Activated T-helper 1 cell treated with anti-CD3 and anti-CD28 coated beads, Interleukin-12 subunit alpha, Interleukin-12 subunit beta, Interleukin-2, Interleukin-4 antibody, amounts not matched to agents 30 ng/mL and 10 ng/mL and 1 ng/mL, durations not matched to agents 14 hours and 24 hours and 36 hours (primary cell): ENCODE measurements at regions of chr10 and their contacts with region 1.

Region 1: GRCh38 chr10:28604567-28605536 is 71.9 kb downstream of the WAC start:
- DNase-seq: no peak
- H3K4me3 Mint-ChIP-seq: no peak overlapping the region
- H3K27ac Mint-ChIP-seq: no peak overlapping the region
- H3K4me1 Mint-ChIP-seq: peaks cover 33% of the 10 kb centered on the region
- H3K27me3 Mint-ChIP-seq: no peaks in the 10 kb centered on the region

Region 2: DNA sequence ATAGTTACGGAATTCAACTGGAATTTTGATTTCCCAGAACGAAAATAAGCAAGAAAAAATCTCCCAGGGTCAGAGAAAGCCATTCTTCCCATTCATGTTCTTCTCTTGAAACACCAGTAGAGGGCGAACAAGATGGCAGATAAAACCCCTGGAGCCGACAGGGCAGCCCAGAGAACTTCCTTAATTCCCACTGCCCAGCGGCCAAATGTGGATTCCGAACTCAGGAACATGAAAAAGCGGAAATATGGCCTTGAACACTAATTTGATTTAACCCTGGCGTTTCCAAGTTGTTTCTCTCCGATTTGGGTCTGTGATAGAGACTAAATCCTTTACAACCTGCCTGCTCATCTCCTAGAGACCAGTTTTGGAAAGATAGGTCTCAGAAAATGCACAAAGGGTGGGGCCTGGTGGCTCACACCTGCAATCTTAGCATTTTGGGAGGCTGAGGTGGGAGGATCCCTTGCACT is 172.6 kb before region 1 on chr10:
- intact Hi-C with region 1: loop called (anchors 5 kb)
- DNase-seq: no peak
- H3K4me3 Mint-ChIP-seq: no peak overlapping the region
- H3K27ac Mint-ChIP-seq: no peak overlapping the region
- H3K4me1 Mint-ChIP-seq: peaks cover 8% of the 10 kb centered on the region
- H3K27me3 Mint-ChIP-seq: peaks cover 2% of the 10 kb centered on the region

Region 3: GRCh38 chr10:28580825-28581224 is 24.0 kb before region 1 on chr10:
- intact Hi-C with region 1: no loop called
- DNase-seq: no peak
- H3K4me3 Mint-ChIP-seq: no peak overlapping the region
- H3K27ac Mint-ChIP-seq: no peak overlapping the region
- H3K4me1 Mint-ChIP-seq: peaks cover 60% of the 10 kb centered on the region
- H3K27me3 Mint-ChIP-seq: no peaks in the 10 kb centered on the region

Region 4: GRCh38 chr10:28619455-28619854 is 14.6 kb after region 1 on chr10:
- intact Hi-C with region 1: loop called (anchors 2 kb)
- DNase-seq: no peak
- H3K4me3 Mint-ChIP-seq: no peak overlapping the region
- H3K27ac Mint-ChIP-seq: no peak overlapping the region
- H3K4me1 Mint-ChIP-seq: no peaks in the 10 kb centered on the region
- H3K27me3 Mint-ChIP-seq: no peaks in the 10 kb centered on the region

Region 5: GRCh38 chr10:28991326-28992270 is 386.7 kb after region 1 on chr10:
- intact Hi-C with region 1: no loop called
- DNase-seq: no peak
- H3K4me3 Mint-ChIP-seq: no peak overlapping the region
- H3K27ac Mint-ChIP-seq: no peak overlapping the region
- H3K4me1 Mint-ChIP-seq: no peaks in the 10 kb centered on the region
- H3K27me3 Mint-ChIP-seq: no peaks in the 10 kb centered on the region